MCF 10A (cell line): ENCODE measurements at regions of chr3 and their contacts with region 1.

Region 1: DNA sequence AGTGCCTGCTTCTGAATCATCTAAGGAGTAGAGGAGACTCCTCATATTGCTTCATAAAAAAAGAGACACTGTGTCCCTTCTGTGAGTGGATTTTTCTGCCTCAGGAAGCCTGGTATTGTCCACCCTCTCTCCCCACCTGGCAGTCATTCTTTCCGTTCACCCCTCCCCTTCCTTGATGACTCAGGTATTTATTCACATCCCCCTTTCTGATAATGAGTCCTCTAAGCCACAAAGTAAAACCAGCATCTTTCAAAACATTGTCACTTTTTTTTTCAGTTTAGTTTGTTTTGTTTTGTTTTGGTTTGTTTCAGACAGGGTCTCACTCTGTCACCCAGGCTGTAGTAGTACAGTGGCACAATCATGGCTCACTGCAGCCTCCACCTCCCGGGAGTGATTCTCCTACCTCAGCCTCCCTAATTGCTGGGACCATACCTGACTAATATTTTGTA is 65.2 kb upstream of the UBE2E1 start:
- DNase-seq: peak; percentile 84
- H3K4me3 Mint-ChIP-seq: peak overlapping the region; percentile 63
- H3K27ac Mint-ChIP-seq: peak overlapping the region; percentile 83
- H3K4me1 Mint-ChIP-seq: peaks cover 32% of the 10 kb centered on the region
- H3K27me3 Mint-ChIP-seq: no peaks in the 10 kb centered on the region
- CTCF ChIP-seq: no peak

Region 2: DNA sequence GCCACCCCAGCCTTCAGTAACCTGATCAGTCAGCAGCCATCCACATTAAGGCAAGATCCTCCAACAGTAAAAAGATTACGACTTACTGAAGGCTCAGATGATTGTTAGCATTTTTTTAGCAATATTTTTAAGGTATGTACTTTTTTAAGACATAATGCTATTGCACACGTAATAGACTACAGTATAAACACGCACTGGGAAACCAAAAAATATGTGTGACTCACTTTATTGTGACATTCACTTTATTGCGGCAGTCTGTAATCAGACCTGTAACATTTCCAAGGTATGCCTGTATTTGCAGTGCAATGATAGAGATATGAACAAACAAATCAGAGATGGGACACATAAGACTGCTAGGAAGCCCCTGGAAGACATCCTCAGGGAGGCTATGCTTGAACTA is 160.2 kb before region 1 on chr3:
- CTCF ChIA-PET with region 1: no interaction called
- POLR2A ChIA-PET with region 1: no interaction called
- intact Hi-C with region 1: loop called (anchors 2 kb)
- DNase-seq: peak; percentile 83
- H3K4me3 Mint-ChIP-seq: peak overlapping the region; percentile 38
- H3K27ac Mint-ChIP-seq: peak overlapping the region; percentile 84
- H3K4me1 Mint-ChIP-seq: peaks cover 32% of the 10 kb centered on the region
- H3K27me3 Mint-ChIP-seq: no peaks in the 10 kb centered on the region
- CTCF ChIP-seq: no peak

Region 3: DNA sequence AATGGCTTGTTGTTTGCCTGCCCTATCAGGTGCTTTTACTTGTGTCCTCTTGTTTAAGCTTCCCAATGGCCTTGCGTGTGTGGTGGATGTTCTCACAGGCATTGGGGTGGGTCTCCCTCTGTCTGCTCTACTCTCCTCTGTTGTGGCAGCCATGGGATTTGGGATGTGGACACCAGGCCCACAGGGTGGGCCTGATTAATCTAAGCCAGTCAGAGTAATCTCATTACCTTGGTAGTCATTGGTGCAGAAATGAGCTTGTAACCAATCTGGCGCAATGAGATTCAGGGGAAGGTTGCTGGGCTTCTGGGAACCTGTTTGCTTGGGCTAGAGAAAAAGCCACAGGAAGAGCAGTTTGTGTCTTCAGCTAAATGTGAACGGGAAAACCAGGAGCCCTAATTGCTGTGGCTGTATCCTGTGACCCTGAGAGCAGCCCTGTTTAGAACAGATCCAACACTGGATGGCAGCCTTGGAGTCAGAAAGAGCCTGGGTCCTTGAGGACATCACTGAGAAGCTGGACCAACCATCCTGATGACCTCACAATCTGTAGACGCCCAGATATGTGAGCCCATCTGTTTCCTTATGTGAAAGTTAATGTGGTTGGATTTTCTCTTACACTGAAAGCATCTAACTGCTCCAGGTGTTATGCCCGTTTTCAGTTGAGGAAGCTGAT is 92.1 kb before region 1 on chr3:
- CTCF ChIA-PET with region 1: no interaction called
- POLR2A ChIA-PET with region 1: interaction called, 4 read pairs
- intact Hi-C with region 1: loop called (anchors 5 kb)
- DNase-seq: peak; percentile 54
- H3K4me3 Mint-ChIP-seq: no peak overlapping the region
- H3K27ac Mint-ChIP-seq: no peak overlapping the region
- H3K4me1 Mint-ChIP-seq: peaks cover 29% of the 10 kb centered on the region
- H3K27me3 Mint-ChIP-seq: no peaks in the 10 kb centered on the region
- CTCF ChIP-seq: no peak

Region 4: DNA sequence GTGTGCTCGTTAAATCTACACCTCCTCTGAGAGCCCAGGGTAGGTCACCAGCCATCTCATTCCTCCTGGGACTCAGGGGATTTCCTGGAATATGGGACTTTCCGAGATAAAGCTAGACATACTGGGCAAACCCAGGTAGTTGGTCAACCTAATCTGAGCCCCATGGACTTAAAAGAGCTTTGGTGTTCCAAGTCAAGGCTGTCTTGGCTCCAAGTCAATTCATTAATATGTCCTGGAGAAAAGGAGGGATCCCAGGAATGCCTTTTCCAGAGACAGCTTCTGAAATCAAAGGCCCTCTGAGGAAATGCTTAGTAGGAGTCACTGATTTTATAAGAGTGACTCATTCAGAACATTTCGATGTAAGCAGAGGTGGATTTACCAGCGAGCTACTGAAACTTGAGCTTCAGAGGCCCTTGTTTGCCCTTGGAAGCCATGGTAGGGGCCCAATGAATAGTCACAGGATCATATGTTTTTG is 72.1 kb before region 1 on chr3:
- CTCF ChIA-PET with region 1: no interaction called
- POLR2A ChIA-PET with region 1: interaction called, 10 read pairs
- intact Hi-C with region 1: no loop called
- DNase-seq: peak; percentile 90
- H3K4me3 Mint-ChIP-seq: no peak overlapping the region
- H3K27ac Mint-ChIP-seq: peak overlapping the region; percentile 95
- H3K4me1 Mint-ChIP-seq: peaks cover 17% of the 10 kb centered on the region
- H3K27me3 Mint-ChIP-seq: no peaks in the 10 kb centered on the region
- CTCF ChIP-seq: no peak

Region 5: DNA sequence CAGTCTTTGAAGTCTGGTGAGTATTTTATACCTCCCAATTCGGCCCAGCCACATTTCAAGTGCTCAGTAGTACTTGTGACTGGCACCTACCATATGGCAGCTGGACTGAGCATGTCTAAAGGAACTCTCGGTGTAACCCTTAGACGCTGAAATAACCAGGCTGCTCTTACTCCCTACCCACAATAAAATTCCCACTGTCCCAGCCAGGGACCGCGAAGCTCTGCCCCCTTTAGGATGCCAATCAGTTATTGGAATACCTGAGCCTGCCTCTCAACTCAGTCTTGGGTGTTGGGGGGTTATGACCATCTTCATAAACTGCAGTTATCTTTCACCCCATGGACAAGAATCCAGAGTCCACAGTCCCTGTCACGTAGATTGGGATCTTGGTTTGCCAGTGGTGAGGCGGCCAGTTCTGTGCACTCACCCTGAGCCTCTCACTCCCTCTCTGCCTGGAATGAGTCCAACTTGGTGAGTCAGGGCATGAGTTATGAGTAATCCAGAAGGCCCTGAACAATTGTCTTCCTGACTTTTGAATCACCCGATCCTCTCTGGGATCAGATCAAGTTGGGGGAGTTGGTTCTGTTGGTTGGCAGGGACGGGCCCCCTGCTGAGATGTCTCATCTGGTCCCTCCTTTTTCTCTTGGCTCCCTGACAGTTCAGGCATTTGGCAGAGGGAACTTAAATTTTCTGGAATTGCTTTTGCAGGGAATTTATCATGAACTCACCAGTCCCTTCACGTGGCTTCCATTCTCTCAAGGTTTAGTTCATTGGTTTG is 54.9 kb before region 1 on chr3:
- CTCF ChIA-PET with region 1: no interaction called
- POLR2A ChIA-PET with region 1: no interaction called
- intact Hi-C with region 1: loop called (anchors 2 kb)
- DNase-seq: peak; percentile 100
- H3K4me3 Mint-ChIP-seq: peak overlapping the region; percentile 24
- H3K27ac Mint-ChIP-seq: peak overlapping the region; percentile 77
- H3K4me1 Mint-ChIP-seq: peaks cover 15% of the 10 kb centered on the region
- H3K27me3 Mint-ChIP-seq: no peaks in the 10 kb centered on the region
- CTCF ChIP-seq: no peak